ENCODE measurements at regions of chr11 and their contacts with region 1.

Region 1: DNA sequence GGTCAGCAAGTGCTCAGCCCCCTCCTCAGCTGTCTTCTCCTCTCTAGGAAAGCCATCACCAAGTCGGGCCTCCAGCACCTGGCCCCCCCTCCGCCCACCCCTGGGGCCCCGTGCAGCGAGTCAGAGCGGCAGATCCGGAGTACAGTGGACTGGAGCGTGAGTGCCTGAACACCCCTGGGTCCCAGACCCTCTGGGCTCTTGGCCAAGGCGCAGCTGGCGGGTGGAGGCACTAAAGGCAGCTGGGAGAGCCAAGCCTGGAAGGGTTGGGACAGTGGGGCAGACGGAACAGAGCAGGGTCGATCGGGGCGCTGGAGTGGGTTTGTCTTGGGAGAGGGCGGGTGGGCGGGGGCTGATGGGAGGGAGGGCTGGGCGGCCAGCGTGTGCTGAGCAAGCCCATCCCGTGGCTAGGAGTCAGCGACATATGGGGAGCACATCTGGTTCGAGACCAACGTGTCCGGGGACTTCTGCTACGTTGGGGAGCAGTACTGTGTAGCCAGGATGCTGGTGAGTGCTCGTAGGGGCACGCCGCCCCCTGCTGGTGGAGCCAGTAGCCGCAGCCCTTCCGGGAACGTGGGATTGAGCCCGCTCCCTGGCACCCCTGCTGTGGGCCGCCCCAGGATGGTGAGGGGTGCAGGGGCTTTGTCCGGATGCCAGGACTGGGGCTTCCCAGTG is 14.1 kb upstream of the MDK start:
- DNase-seq: peak; percentile 62 to 88 (median 74)
- ATAC-seq: peak; percentile 88
- H3K4me3 ChIP-seq: no peak overlapping the region
- H3K4me3 Mint-ChIP-seq: no peak overlapping the region
- H3K27ac ChIP-seq: no peak overlapping the region
- H3K27ac Mint-ChIP-seq: peak overlapping the region; percentile 49
- H3K4me1 ChIP-seq: peaks cover 61% of the 10 kb centered on the region
- H3K4me1 Mint-ChIP-seq: peaks cover 55% of the 10 kb centered on the region
- H3K27me3 ChIP-seq: no peaks in the 10 kb centered on the region
- H3K27me3 Mint-ChIP-seq: no peaks in the 10 kb centered on the region
- CTCF ChIP-seq: peak; percentile 97

Region 2: DNA sequence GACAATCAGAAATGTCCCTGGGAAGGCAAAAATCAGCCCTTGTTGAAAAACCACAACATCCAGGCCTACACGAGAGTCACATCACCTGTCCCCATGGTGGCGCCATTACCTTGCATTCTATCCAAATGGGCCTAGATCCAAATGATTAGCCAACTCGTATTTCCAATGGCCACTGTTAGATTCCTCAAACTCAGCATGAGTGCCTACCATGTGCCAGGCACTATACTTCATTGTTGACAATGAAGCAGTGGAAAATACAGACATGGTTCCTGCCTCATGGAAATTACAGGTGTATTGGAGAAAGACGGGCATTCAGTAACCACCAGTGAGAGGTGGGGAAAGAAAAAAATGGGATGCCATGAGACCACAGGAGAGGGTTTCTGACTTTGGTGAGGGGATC is 119.7 kb before region 1 on chr11:
- CTCF ChIA-PET with region 1: interaction called, 3 read pairs
- POLR2A ChIA-PET with region 1: interaction called, 3 read pairs
- intact Hi-C with region 1: loop called (anchors 2 kb)
- DNase-seq: peak in 11 of 14 experiments; percentile 12 to 69 (median 34)
- ATAC-seq: peak; percentile 48
- H3K4me3 ChIP-seq: no peak overlapping the region
- H3K4me3 Mint-ChIP-seq: no peak overlapping the region
- H3K27ac ChIP-seq: no peak overlapping the region
- H3K27ac Mint-ChIP-seq: no peak overlapping the region
- H3K4me1 ChIP-seq: peaks cover 12% of the 10 kb centered on the region
- H3K4me1 Mint-ChIP-seq: no peaks in the 10 kb centered on the region
- H3K27me3 ChIP-seq: no peaks in the 10 kb centered on the region
- H3K27me3 Mint-ChIP-seq: no peaks in the 10 kb centered on the region
- CTCF ChIP-seq: peak; percentile 31

Region 3: DNA sequence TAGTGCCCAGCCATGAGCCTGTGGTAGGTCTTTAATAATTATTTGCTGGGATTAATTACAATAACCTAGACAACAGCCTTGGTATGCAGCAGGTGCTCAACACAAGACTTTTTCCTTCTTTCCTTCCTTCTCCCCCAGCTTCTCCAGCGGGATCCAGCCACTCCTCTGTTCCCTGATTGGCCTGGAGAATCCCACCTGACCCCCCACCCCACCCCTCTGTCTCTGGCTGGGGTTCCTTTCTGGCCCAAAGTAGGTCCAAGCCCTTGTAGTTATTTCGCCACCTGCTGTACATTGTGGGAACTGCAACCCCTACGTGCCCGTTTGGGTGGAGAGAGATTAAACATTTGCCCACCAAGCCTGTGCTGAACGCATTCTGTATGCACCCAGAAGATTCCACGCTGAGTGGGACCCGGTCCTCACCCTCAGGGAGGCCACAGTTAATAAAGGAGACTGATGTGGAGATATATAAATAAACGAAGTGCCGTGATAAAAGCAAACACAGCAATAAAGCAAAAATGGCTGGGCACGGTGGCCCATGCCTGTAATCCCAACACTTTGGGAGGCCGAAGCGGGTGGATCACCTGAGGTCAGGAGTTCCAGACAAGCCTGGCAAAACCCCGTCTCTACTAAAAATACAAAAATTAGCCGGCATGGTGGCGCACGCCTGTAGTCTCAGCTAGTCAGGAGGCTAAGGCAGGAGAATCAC is 52.2 kb before region 1 on chr11:
- CTCF ChIA-PET with region 1: no interaction called
- POLR2A ChIA-PET with region 1: no interaction called
- intact Hi-C with region 1: loop called in 1 of 2 experiments (anchors 5 kb)
- DNase-seq: peak; percentile 59 to 86 (median 70)
- ATAC-seq: peak; percentile 81
- H3K4me3 ChIP-seq: no peak overlapping the region
- H3K4me3 Mint-ChIP-seq: no peak overlapping the region
- H3K27ac ChIP-seq: no peak overlapping the region
- H3K27ac Mint-ChIP-seq: no peak overlapping the region
- H3K4me1 ChIP-seq: peaks cover 31% of the 10 kb centered on the region
- H3K4me1 Mint-ChIP-seq: peaks cover 23% of the 10 kb centered on the region
- H3K27me3 ChIP-seq: no peaks in the 10 kb centered on the region
- H3K27me3 Mint-ChIP-seq: no peaks in the 10 kb centered on the region
- CTCF ChIP-seq: peak; percentile 97

Region 4: GRCh38 chr11:46346886-46347636 is 20.3 kb before region 1 on chr11 and contains the start of gene DGKZ:
- CTCF ChIA-PET with region 1: interaction called, 40 read pairs
- POLR2A ChIA-PET with region 1: interaction called, 26 read pairs
- intact Hi-C with region 1: loop called (anchors 1 kb)
- DNase-seq: peak; percentile 77 to 97 (median 88)
- ATAC-seq: peak; percentile 77
- H3K4me3 ChIP-seq: peak within 1 kb of the TSS; percentile 99
- H3K4me3 Mint-ChIP-seq: peak within 1 kb of the TSS; percentile 95
- H3K27ac ChIP-seq: peak within 1 kb of the TSS; percentile 44 to 73
- H3K27ac Mint-ChIP-seq: peak within 1 kb of the TSS; percentile 89
- H3K4me1 ChIP-seq: peaks cover 86% of the 10 kb centered on the region
- H3K4me1 Mint-ChIP-seq: peaks cover 83% of the 10 kb centered on the region
- H3K27me3 ChIP-seq: no peaks in the 10 kb centered on the region
- H3K27me3 Mint-ChIP-seq: no peaks in the 10 kb centered on the region
- CTCF ChIP-seq: peak; percentile 34
- total RNA-seq, gene DGKZ: 159 to 166 TPM

Region 5: DNA sequence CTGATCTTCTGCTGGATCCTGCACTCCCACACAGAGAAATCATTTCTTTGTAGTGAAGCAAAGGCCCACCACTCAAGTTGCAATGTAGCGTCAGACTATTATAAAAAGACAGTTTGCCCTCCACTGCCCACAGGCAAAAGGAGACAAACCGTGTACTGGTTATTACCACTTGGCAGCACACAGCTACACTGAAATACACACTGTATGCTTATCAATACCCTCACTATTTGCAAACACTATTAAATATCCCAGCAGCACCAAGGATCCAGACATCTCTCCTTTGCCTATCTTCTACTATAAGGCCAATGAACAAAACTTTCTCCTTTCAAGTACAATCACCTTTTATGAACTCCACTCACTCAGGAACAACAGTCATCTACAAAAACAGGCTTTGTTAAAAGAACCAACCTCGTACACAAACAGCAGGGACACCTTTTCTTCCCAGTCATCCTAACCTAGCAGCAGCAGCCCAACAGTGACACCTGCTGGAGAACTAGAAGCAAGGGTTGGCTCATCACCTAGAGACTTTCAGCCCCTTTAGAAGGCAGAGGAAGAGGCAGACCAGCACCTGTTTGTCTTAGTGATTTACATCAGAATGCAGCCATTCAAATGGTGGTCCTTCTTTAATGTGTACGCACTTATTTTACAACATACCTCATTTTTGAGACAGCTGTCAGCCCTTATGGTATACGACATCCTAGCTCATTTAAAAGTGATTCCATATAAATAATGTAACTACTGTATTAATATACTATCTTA is 170.3 kb after region 1 on chr11:
- CTCF ChIA-PET with region 1: no interaction called
- POLR2A ChIA-PET with region 1: no interaction called
- intact Hi-C with region 1: loop called in 1 of 2 experiments (anchors 5 kb)
- DNase-seq: peak; percentile 30 to 82 (median 48)
- ATAC-seq: peak; percentile 96
- H3K4me3 ChIP-seq: no peak overlapping the region
- H3K4me3 Mint-ChIP-seq: no peak overlapping the region
- H3K27ac ChIP-seq: no peak overlapping the region
- H3K27ac Mint-ChIP-seq: peak overlapping the region; percentile 1
- H3K4me1 ChIP-seq: peaks cover 3% of the 10 kb centered on the region
- H3K4me1 Mint-ChIP-seq: peaks cover 36% of the 10 kb centered on the region
- H3K27me3 ChIP-seq: no peaks in the 10 kb centered on the region
- H3K27me3 Mint-ChIP-seq: no peaks in the 10 kb centered on the region
- CTCF ChIP-seq: peak; percentile 96

Region 6: GRCh38 chr11:47111318-47111804 is 744.0 kb after region 1 on chr11:
- CTCF ChIA-PET with region 1: no interaction called
- POLR2A ChIA-PET with region 1: no interaction called
- intact Hi-C with region 1: no loop called
- DNase-seq: no peak
- ATAC-seq: no peak
- H3K4me3 ChIP-seq: no peak overlapping the region
- H3K4me3 Mint-ChIP-seq: no peak overlapping the region
- H3K27ac ChIP-seq: no peak overlapping the region
- H3K27ac Mint-ChIP-seq: no peak overlapping the region
- H3K4me1 ChIP-seq: no peaks in the 10 kb centered on the region
- H3K4me1 Mint-ChIP-seq: no peaks in the 10 kb centered on the region
- H3K27me3 ChIP-seq: no peaks in the 10 kb centered on the region
- H3K27me3 Mint-ChIP-seq: no peaks in the 10 kb centered on the region
- CTCF ChIP-seq: no peak

Measured in CD4-positive, alpha-beta T cell (primary cell).